ENCODE measurements at regions of chr12 and their contacts with region 1.

Region 1: DNA sequence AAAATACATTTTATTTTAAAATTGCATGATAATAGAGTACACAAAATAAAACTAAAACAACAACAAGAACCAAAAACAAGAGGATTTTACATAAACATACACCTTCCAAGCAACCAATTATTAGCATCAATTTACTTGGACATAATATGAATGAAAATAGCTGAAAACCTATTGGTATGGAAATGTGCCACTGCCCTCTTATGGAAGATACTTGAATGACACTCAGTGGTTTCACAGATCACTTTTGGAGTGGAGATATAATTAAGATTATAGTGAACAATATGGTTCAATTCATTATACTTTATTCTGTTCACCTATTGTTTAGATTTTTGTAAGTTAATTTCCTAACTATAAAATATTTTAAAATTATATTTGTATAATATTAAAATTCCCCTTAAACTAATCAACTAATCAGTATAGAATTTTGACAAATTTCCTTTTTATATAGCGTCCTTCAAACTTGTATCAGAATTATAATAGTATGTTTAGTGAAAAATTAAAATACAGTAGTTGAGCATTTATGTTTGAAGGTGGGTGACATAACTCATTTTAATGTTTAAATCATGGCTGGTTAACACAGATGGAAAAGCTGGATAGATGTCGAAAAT is 70.1 kb downstream of the SLC6A15 start:
- DNase-seq: peak; percentile 37
- H3K4me3 Mint-ChIP-seq: no peak overlapping the region
- H3K27ac Mint-ChIP-seq: no peak overlapping the region
- H3K4me1 Mint-ChIP-seq: no peaks in the 10 kb centered on the region
- H3K27me3 Mint-ChIP-seq: no peaks in the 10 kb centered on the region
- CTCF ChIP-seq: peak; percentile 81

Region 2: GRCh38 chr12:84507956-84508850 is 334.3 kb before region 1 on chr12:
- CTCF ChIA-PET with region 1: no interaction called
- intact Hi-C with region 1: loop called (anchors 5 kb)
- DNase-seq: peak; percentile 24
- H3K4me3 Mint-ChIP-seq: no peak overlapping the region
- H3K27ac Mint-ChIP-seq: no peak overlapping the region
- H3K4me1 Mint-ChIP-seq: peaks cover 19% of the 10 kb centered on the region
- H3K27me3 Mint-ChIP-seq: no peaks in the 10 kb centered on the region
- CTCF ChIP-seq: no peak

Region 3: DNA sequence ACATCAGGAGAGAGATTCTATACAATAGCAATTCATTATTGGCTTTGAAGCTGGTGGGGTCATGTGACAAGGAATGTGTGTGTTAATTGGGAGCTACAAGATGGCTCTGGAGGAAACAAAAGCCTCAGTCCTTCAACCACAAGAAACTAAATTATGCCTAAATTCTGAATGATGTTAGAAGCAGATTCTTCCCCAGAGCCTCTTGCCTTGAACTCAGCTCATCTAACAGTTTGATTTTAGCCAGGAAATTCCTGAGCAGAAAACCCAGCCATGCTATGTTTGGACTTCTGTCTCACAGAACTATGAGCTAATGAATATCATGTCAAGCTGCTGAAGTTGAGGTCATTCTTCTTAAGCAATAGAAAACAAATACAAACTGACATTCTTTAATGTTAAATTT is 204.6 kb before region 1 on chr12:
- CTCF ChIA-PET with region 1: no interaction called
- intact Hi-C with region 1: loop called (anchors 1 kb)
- DNase-seq: no peak
- H3K4me3 Mint-ChIP-seq: no peak overlapping the region
- H3K27ac Mint-ChIP-seq: no peak overlapping the region
- H3K4me1 Mint-ChIP-seq: no peaks in the 10 kb centered on the region
- H3K27me3 Mint-ChIP-seq: no peaks in the 10 kb centered on the region
- CTCF ChIP-seq: no peak

Measured in Calu3 (cell line).